ENCODE measurements at regions of chr17 and their contacts with region 1.

Region 1: GRCh38 chr17:59829217-59830006 is 63.3 kb downstream of the TUBD1 start:
- DNase-seq: peak; percentile 82 to 100
- ATAC-seq: peak; percentile 89 to 94
- H3K4me3 ChIP-seq: peak overlapping the region; percentile 22; the same call in 1 of the 3 replicates
- H3K27ac ChIP-seq: peak overlapping the region; percentile 96 to 97
- H3K4me1 ChIP-seq: peaks cover 87% of the 10 kb centered on the region
- CTCF ChIP-seq: no peak
- EP300 ChIP-seq: peak; percentile 99; a peak in 4 of 5 replicates
- POLR2A ChIP-seq: no peak
- RAD21 ChIP-seq: peak; percentile 24 to 46; a peak in 3 of 5 replicates

Region 2: DNA sequence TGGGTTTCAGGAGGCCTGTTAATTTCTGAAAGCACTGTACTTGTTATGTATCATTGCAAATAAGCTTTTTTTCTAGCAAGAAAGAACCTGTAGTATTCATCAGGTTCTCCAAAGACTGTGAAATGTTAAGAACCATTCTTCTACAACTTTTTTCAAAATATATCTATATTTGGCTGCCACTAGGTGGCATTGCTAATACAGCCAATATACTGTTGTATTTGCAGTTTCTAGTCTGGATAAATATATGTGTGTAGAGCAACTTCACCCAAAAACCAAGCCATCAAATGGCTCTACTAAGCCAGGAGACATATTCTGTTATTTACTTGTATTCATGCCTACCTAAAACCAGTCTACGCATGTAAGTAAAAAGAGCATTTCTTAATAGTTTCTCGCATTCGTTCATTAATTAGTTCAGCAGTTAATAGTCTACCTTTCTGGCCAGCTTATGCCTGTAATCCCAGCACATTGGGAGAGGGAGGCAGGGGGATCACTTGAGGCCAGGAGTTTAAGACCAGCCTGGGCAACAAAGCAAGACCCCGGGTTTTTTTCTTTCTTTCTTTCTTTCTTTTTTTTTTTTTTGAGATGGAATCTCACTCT is 82.5 kb before region 1 on chr17:
- CTCF ChIA-PET with region 1: interaction called, 57 read pairs
- POLR2A ChIA-PET with region 1: no interaction called
- DNase-seq: peak; percentile 46 to 82
- ATAC-seq: peak; percentile 74 to 87
- H3K4me3 ChIP-seq: no peak overlapping the region
- H3K27ac ChIP-seq: peak overlapping the region; percentile 93 to 95
- H3K4me1 ChIP-seq: peaks cover 44% of the 10 kb centered on the region
- CTCF ChIP-seq: peak; percentile 95
- EP300 ChIP-seq: no peak
- POLR2A ChIP-seq: no peak
- RAD21 ChIP-seq: peak; percentile 89 to 91

Region 3: DNA sequence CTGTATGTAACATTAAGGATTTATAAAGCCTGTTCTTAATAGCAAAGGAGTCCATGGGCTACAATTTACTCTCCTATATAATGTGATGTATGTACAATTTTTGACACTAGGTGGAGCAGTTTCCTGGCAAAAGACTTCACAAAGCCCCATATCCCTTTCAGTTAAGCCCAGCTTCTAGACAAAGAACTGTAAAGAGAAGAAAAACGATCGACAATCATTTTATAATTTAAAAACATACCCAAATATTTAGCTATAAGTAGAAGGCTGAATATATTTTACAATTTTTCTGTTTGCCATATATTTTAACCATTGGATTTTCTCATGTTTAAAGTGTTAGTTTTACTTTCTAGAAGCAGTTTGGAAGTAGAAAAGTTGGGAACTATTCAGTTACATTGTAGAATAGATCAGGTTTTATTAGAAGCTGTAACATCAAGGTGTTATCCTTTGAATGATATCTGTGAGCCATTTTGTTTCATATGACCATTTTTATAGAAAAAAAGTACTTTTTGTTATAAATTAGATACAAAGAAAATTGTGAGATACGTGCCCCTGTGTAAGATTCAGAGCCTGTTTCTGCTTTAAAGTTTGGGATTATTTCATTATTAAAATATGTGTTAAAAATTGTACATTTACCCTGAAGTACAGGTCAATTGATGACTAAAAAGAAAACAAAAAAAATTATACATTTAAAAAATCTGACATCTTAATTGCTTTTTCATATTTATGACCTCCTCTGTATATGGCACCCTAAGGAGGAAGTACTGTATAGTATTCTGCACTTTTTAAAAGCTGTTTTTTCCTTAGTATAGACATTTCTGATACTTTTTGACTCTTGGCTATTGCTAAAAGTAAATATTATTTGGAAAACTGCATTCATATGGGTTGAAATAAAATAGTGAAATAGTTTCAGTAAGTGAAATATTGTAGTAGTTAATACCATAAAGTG is 75.6 kb before region 1 on chr17:
- CTCF ChIA-PET with region 1: interaction called, 57 read pairs
- POLR2A ChIA-PET with region 1: interaction called, 50 read pairs
- DNase-seq: peak; percentile 81 to 94
- ATAC-seq: peak; percentile 49 to 65
- H3K4me3 ChIP-seq: no peak overlapping the region
- H3K27ac ChIP-seq: peak overlapping the region; percentile 95
- H3K4me1 ChIP-seq: peaks cover 92% of the 10 kb centered on the region
- CTCF ChIP-seq: peak; percentile 98
- EP300 ChIP-seq: no peak
- POLR2A ChIP-seq: no peak
- RAD21 ChIP-seq: peak; percentile 97 to 98

Region 4: GRCh38 chr17:59786536-59787319 is 42.7 kb before region 1 on chr17:
- CTCF ChIA-PET with region 1: interaction called, 5 read pairs
- POLR2A ChIA-PET with region 1: interaction called, 70 read pairs
- DNase-seq: peak; percentile 81 to 100
- ATAC-seq: peak; percentile 88 to 92
- H3K4me3 ChIP-seq: no peak overlapping the region
- H3K27ac ChIP-seq: peak overlapping the region; percentile 94 to 98
- H3K4me1 ChIP-seq: peaks cover 92% of the 10 kb centered on the region
- CTCF ChIP-seq: no peak
- EP300 ChIP-seq: peak; percentile 99 to 100
- POLR2A ChIP-seq: no peak
- RAD21 ChIP-seq: peak; percentile 43 to 68

Region 5: GRCh38 chr17:59791603-59792457 is 37.6 kb before region 1 on chr17:
- CTCF ChIA-PET with region 1: interaction called, 3 read pairs
- POLR2A ChIA-PET with region 1: interaction called, 70 read pairs
- DNase-seq: peak in 1 of 2 experiments; percentile 95
- ATAC-seq: peak; percentile 62 to 86; a peak in 4 of 6 replicates
- H3K4me3 ChIP-seq: no peak overlapping the region
- H3K27ac ChIP-seq: peak overlapping the region; percentile 94 to 98
- H3K4me1 ChIP-seq: peaks cover 67% of the 10 kb centered on the region
- CTCF ChIP-seq: no peak
- EP300 ChIP-seq: peak; percentile 83 to 89; a peak in 4 of 5 replicates
- POLR2A ChIP-seq: no peak
- RAD21 ChIP-seq: 0 out of 5 replicates have a peak, but pooled peaks have one; percentile 26 to 29

Region 6: DNA sequence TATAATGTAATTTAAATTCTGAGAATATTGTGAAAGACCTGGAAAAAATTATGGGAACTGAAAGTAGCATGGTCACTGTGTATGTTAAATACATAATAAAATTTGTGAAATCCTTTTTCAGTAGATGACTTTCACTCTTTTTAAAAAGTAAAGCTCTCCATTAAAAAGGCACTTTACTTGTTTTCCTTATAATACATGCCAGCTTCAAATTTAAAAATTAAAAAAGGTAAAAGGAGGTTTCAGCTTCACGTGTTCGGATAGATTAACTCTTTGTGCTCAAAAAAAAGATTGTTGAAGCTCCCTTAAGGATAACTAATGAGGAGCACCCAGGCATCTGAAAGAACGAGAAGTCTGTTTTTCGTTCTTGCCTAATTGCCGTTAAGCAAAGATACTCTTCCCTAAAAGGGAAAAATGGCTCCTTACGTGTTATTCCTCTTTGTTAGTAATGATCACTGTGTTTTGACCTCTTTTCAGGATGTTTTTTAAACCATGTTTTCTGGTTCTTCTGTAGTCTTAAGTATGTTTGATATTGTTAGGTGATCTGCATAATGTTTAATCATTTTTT is 24.4 kb before region 1 on chr17:
- CTCF ChIA-PET with region 1: interaction called, 13 read pairs
- POLR2A ChIA-PET with region 1: interaction called, 23 read pairs
- DNase-seq: peak in 1 of 2 experiments; percentile 89
- ATAC-seq: peak in 1 of 2 experiments; percentile 29; a peak in 3 of 6 replicates
- H3K4me3 ChIP-seq: peak overlapping the region; percentile 4; the same call in 1 of the 3 replicates
- H3K27ac ChIP-seq: peak overlapping the region; percentile 90 to 92
- H3K4me1 ChIP-seq: peaks cover 85% of the 10 kb centered on the region
- CTCF ChIP-seq: no peak
- EP300 ChIP-seq: no peak
- POLR2A ChIP-seq: no peak
- RAD21 ChIP-seq: no peak

Region 7: DNA sequence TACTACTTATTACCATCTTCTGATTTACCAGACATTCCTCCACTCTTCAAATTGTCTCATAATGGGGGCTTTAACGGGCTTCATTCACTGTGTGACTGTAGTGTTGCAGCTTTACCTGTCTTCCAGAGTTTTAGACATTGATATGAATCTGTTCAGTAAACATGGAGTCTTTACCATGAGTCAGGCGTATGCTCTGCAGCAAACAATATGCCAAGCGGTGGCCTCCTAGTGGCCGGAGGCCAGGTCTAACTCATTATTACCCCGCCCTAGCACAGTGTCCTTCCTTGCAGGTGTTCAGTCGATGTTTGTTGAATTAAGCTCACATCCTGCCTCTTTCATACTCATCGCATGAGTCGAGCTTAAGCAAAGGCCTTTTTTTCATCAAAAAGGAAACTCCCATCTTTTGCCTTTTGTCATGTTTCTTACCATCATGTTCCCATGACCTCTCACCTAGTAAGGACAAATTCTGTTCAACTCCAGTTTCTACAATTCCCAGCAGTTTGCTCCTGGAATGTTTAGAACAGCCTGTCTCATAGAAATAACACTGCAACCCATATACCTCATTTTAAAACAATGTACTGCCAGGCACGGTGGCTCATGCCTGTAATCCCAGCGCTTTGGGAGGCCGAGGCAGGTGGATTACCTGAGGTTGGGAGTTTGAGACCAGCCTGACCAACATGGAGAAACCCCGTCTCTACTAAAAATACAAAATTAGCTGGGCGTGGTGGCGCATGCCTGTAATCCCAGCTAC is 23.9 kb after region 1 on chr17:
- CTCF ChIA-PET with region 1: interaction called, 17 read pairs
- POLR2A ChIA-PET with region 1: interaction called, 7 read pairs
- DNase-seq: peak; percentile 86 to 100
- ATAC-seq: peak; percentile 82 to 88
- H3K4me3 ChIP-seq: no peak overlapping the region
- H3K27ac ChIP-seq: peak overlapping the region; percentile 91 to 96
- H3K4me1 ChIP-seq: peaks cover 96% of the 10 kb centered on the region
- CTCF ChIP-seq: peak; percentile 67
- EP300 ChIP-seq: peak; percentile 95 to 97
- POLR2A ChIP-seq: no peak
- RAD21 ChIP-seq: peak; percentile 64 to 71

Measured in A549 (cell line).